ENCODE measurements at regions of chr22 and their contacts with region 1.

Region 1: DNA sequence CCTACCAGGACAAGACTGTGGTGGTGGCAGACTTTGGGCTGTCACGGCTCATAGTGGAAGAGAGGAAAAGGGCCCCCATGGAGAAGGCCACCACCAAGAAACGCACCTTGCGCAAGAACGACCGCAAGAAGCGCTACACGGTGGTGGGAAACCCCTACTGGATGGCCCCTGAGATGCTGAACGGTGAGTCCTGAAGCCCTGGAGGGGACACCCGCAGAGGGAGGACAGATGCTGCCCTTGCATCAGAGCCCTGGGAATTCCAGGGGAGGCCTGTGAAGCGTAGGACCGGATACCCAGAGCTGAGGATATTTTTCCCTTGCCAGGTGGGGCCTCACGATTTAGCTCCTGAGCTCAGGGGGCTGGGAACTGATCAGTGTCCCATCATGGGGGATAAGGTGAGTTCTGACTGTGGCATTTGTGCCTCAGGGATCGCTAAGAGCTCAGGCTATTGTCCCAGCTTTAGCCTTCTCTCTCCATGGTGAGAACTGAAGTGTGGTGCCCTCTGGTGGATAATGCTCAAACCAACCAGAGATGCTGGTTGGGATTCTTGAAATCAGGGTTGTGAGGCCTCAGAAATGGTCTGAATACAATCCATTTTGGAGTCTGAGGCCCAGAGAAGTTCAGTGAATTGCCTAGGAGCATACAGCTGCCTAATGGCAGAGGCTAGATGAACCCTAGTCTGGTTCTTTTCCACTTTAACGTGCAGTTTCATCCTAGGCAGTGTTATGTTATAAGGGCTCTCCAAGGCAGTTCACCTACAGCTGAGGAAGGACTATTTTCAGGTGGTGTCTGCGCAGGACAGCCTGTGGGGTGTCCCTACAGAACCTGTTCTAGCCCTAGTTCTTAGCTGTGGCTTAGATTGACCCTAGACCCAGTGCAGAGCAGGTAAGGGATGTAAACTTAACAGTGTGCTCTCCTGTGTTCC is 19.5 kb downstream of the PIK3IP1 start:
- DNase-seq: peak; percentile 64
- ATAC-seq: peak; percentile 68
- H3K4me3 Mint-ChIP-seq: no peak overlapping the region
- H3K27ac Mint-ChIP-seq: no peak overlapping the region
- H3K4me1 Mint-ChIP-seq: no peaks in the 10 kb centered on the region
- H3K27me3 Mint-ChIP-seq: no peaks in the 10 kb centered on the region

Region 2: GRCh38 chr22:31122196-31122531 is 150.6 kb before region 1 on chr22:
- CTCF ChIA-PET with region 1: no interaction called
- DNase-seq: no peak
- ATAC-seq: no peak
- H3K4me3 Mint-ChIP-seq: no peak overlapping the region
- H3K27ac Mint-ChIP-seq: no peak overlapping the region
- H3K4me1 Mint-ChIP-seq: no peaks in the 10 kb centered on the region
- H3K27me3 Mint-ChIP-seq: no peaks in the 10 kb centered on the region

Region 3: DNA sequence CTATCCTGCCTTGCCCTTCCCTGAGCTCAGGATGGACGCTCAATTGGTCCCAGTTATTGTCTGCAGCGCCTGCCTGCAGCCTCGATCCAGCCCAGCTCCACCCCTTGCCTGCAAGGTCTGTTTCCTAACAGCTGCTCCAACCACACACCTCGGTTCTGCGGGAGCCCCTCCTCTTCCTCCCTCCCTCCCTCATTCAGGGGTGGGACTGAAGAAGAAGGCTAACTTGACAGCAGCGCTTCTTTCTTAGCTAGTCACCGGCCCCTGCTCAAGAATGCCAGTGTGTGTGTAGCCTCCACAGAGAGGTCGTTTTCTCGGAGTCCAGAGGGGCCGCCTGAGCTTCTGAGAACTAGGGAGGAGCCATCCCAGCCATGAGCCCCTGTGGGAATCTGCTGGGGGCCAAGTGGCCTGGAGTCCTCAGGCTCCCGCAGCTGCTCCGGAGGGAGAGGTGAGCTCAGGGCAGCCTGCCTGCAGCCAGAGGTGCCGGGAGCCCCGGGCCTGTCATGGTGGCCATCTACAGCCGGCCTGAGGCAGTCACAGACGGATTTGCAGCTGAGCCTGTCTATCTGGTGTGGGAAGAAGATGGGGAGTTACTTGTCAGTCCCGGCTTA is 24.5 kb before region 1 on chr22:
- CTCF ChIA-PET with region 1: interaction called, 16 read pairs
- DNase-seq: peak; percentile 89
- ATAC-seq: peak; percentile 99
- H3K4me3 Mint-ChIP-seq: peak overlapping the region; percentile 38
- H3K27ac Mint-ChIP-seq: peak overlapping the region; percentile 68
- H3K4me1 Mint-ChIP-seq: peaks cover 35% of the 10 kb centered on the region
- H3K27me3 Mint-ChIP-seq: no peaks in the 10 kb centered on the region

Region 4: DNA sequence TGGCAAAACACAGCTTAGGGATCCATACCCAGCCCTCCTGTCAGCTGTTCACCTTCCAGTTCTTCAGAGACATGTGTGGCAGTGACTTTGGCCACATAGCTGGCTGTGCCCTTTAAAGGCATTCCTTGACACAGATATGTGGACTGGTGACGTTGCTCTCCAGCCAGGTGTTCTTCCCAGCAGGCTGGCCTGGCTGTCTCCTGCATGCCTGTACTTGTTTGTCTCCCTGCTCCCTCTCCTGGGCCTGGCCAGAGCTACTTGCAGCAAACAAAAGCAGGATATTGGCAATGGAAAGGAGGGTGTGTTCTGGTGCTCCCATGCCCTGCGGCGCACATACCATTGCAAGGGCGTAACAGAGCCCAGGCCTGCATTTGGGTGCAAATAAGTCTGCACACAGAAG is 18.8 kb before region 1 on chr22:
- CTCF ChIA-PET with region 1: interaction called, 16 read pairs
- DNase-seq: no peak
- ATAC-seq: no peak
- H3K4me3 Mint-ChIP-seq: no peak overlapping the region
- H3K27ac Mint-ChIP-seq: no peak overlapping the region
- H3K4me1 Mint-ChIP-seq: peaks cover 2% of the 10 kb centered on the region
- H3K27me3 Mint-ChIP-seq: no peaks in the 10 kb centered on the region

Region 5: DNA sequence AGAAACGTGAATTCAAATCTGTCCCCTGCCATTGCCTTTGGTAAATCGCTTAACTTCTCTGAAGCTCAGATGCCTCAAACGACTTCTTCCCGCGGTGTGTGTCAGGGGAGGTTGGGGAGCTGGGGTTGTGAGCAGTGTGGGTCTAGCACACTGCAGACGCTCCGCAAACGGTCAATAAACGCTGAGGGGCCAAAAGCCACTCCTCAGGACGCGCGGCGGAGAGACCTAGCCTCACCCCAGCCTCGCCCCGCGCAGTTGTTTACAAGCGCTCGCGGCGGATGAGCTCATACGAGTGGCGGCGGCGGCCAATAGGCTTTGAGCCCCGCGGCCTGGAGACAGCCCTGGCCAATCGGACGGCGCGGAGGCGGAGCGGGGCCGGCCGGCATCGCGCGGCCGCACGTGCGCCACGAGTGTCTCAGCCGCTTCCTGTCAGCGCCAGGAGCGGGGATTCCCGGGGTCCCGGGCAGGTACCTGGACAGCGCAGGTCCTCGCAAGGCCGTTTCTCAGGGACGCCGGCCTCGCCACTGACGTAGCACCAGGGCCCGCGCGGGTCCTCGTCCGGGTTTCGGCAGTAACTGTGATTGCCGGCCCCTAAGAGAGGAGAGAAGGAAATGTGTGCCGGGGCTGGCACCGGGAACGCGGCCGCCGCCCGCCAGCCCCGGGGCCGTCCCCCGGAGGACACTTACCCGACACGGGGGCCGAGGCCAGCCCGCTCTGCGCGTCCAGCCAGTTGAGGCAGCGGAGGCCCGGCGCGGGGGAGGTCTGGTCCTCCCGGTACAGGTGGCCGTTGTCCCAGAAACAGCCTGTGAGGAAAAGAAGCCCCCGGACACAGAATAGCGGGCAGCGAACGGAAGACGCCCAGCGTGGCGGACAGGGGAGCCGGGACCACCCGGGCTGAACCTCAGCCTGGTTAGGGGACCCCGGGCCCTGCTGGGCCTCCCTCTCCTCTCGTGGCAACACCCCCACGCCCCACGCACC is 18.0 kb after region 1 on chr22:
- CTCF ChIA-PET with region 1: interaction called, 51 read pairs
- DNase-seq: peak; percentile 97
- ATAC-seq: peak; percentile 89
- H3K4me3 Mint-ChIP-seq: peak overlapping the region; percentile 97
- H3K27ac Mint-ChIP-seq: peak overlapping the region; percentile 99
- H3K4me1 Mint-ChIP-seq: peaks cover 75% of the 10 kb centered on the region
- H3K27me3 Mint-ChIP-seq: no peaks in the 10 kb centered on the region

Measured in activated CD8-positive, alpha-beta memory T cell treated with anti-CD3 and anti-CD28 coated beads, Interleukin-2, amount 10 ng/mL, durations not matched to agents 7 days and 5 days (primary cell).